Right ventricle myocardium superior (tissue), 1 donor: ENCODE measurements at regions of chr17 and their contacts with region 1.

Region 1: GRCh38 chr17:4215882-4216570 is 47.8 kb downstream of the ANKFY1 start:
- DNase-seq: no peak
- ATAC-seq: peak; percentile 6

Region 2: DNA sequence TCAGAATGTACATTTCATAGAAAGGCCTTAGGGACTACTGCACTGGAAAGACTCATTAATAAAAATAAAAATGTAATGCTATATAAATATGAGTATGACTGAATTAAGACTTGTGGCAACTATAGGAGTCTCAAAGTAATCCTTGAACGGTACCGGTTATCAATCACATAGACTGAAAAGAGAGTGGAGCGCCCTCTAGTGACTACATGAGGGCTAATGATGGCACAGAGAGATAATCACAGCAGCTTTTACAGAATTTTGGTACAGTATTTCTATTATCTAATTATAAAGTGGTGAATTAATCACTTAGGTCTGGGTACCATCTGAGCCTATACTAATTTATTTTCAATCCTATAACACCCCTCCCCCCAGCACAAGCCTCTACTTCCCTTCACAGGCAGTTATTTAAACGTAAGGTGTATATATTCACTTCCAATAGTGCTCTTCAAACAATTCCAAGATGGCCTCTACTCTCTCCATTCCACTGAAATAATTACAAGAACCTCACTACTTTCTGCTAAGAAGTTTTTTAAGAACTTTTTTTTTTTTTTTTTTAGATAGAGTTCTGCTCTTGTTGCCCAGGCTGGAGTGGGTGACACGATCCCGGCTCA is 88.5 kb after region 1 on chr17:
- intact Hi-C with region 1: loop called (anchors 5 kb)
- DNase-seq: no peak
- ATAC-seq: peak; percentile 64

Region 3: GRCh38 chr17:4366327-4367063 is 150.5 kb after region 1 on chr17 and contains the start of gene UBE2G1:
- intact Hi-C with region 1: loop called (anchors 5 kb)
- DNase-seq: peak; percentile 99
- ATAC-seq: peak; percentile 93
- total RNA-seq, gene UBE2G1: 107 TPM

Region 4: GRCh38 chr17:4412933-4413831 is 197.2 kb after region 1 on chr17:
- intact Hi-C with region 1: loop called (anchors 2 kb)
- DNase-seq: peak; percentile 96
- ATAC-seq: peak; percentile 98